Lower leg skin (tissue), 4 donors: ENCODE measurements at regions of chr11 and their contacts with region 1.

Region 1: DNA sequence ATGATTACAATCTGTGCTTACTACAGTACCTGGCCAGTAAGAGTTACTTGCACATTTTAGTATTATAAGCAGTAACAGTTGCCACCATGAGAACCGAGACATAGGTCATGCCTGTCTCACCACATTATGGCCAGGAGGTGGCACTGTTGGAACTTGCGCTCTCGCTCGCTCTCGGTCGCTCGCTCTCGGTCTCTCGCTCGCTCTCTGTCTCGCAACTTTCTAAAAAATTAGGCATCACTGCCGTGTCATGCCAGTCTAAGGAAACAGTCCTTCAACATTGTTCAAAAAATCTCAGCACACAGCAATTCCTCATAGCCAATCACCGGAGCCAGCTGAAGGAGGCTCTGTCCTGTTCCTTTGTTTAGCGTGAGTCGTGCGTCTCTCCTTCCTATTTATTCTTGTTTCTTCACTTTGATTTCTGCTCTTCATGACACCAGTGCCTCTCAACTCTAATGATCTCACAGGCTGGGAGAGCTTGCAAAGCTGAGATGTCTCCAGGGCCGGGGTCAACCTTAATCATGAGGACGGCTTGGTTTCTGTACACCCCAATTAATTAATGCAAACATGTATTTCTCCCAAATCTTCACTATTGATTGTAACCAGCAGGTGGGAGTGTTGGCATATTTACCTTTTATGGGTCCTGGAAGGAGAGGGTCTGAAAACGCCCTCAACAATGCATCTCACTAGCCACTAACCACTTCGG is 6.3 kb upstream of the ADAMTS8 start:
- DNase-seq: peak; percentile 68 to 94
- H3K4me3 ChIP-seq: no peak overlapping the region
- CTCF ChIP-seq: peak in 1 of 3 donors; percentile 67
- POLR2A ChIP-seq: no peak

Region 2: DNA sequence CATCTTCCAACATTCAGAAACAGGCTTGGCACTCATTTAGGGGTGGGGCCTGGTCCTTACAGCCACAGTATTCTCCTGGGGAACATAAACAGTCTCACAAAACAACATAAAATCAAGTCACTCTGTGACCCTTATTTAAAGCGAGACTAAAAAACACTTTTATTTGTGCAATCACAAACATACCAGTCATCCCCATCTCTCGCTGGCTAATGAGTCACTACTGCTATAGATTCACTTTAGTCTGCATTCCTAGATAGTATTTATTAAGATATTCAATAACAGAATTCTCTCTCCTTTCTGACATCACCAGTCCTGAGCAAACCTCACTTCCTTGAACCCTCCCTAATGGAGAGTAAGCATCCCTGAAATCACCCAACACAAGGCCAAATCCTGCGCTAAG is 187.9 kb before region 1 on chr11:
- intact Hi-C with region 1: no loop called
- DNase-seq: no peak
- H3K4me3 ChIP-seq: no peak overlapping the region
- CTCF ChIP-seq: no peak
- POLR2A ChIP-seq: no peak

Region 3: DNA sequence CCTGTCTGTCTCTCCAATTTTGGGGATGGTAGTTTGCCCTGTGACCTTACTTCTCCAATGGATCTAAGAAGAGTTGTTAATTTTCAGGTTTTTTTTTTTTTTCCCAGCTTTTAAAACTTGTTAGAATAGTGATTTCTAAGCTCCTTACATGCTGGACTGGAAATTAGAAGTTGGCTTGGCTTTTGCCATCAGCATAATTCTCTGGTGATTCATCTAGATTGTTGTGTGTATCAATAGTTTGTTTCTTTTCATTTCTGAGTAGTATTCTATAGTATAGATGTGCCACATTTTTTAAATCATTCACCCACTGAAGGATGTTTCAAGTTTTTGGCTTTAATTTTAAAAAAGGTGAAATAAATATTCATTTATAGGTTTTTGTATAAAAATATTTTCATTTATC is 65.2 kb after region 1 on chr11:
- intact Hi-C with region 1: no loop called
- DNase-seq: no peak
- H3K4me3 ChIP-seq: no peak overlapping the region
- CTCF ChIP-seq: no peak
- POLR2A ChIP-seq: no peak

Region 4: DNA sequence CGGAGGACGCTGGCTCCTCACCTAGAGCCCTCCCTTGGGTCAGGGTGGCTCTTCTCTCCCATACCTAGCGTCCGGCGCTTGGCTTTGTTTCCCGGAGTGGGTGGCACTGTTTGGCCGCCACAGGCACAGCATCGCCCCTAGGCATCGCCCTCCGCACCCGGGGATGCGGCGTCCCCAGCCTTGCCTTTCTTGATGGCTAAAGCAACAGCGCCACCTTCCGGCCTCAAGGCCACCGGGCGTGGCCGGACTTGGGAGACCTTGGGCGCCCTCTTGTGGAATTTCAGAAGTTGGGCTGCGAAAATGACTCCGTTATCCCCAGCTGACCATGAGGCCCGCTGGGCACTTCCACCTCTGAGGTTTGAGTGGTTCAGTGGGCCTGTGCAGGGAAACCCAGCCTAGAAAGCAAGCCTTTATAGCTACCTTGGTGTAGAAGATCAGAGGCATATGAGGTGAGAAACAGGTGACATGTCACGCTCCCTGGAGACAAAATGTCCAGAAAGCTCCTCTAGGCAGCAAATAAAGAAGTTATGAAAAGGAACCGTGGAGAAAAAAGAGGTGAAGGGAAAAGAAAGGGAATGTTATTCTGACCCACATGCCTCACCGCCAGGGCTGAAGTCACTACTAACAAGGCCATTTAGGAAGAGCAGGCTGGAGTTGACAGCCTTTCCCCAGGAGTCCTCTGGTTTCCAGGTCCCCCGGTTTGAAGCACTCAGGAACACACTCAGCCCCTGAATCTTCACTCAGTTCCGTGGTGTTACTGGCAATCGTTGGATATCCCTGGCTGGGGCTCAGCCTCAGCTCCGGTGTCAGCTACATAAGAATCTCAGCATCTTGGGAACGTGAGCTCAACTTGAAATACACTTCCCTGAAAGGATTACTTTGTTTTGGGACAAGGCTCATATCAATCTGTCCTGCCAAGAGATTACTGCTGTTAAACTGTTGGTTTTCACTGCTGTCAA is 427.5 kb after region 1 on chr11:
- intact Hi-C with region 1: loop called (anchors 1 kb)
- DNase-seq: peak; percentile 84 to 98
- H3K4me3 ChIP-seq: no peak overlapping the region
- CTCF ChIP-seq: peak in 1 of 3 donors; percentile 97
- POLR2A ChIP-seq: no peak

Region 5: DNA sequence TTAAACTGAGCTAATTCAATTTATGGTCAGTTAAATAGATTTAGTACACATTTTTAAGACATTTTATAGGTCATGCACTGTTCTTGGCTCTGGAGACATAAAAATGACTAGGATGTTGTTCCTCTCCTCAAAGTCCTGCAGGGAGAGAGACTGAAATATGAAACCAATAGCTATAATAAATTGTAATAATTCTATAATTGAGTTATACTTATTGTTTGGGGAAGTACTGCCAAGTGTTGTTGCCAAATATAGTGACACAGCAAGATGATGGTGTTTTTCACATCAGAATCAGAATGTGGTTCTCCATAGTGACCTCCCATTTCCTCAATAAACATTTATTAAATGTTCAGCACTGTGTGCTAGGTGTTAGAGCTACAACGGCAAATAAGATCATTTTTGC is 1406.4 kb after region 1 on chr11:
- intact Hi-C with region 1: loop called (anchors 5 kb)
- DNase-seq: no peak
- H3K4me3 ChIP-seq: no peak overlapping the region
- CTCF ChIP-seq: no peak
- POLR2A ChIP-seq: no peak